AG04449 (cell line): ENCODE measurements at regions of chr22 and their contacts with region 1.

Region 1: GRCh38 chr22:46013460-46014416 is 36.8 kb upstream of the WNT7B start:
- DNase-seq: peak; percentile 76
- H3K4me3 ChIP-seq: peak overlapping the region; percentile 73
- CTCF ChIP-seq: peak; percentile 79

Region 2: DNA sequence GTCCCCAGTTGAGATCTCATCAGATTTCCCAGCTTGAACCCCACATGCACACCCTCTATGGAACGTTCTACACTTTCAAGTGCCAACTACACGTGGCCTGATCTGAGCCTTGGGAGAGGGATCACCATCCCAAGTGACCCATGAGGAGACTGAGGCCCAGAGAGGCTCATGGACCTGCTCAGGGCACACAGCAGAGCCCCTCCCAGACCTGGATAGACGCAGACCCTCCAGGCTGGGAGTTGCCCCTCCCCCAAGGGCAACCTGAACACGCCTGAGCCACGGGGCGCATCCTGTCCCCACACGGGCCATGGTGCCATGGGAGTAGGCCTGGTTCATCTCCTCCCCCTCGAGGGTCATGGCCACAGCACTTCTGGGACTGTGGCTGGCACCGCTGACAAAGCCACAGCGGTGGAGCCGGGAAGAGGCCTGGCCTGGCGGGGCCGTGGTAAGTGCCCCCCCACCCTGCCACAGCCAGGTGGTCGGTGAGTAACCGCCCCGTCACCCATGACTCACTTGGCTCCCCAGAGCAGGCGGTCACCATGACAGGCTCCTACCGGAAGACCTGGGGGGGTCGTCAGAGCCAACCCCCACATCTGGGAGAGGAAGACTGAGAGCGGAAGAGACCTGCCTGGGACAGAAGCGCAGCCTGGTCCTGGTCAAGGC is 44.9 kb before region 1 on chr22:
- CTCF ChIA-PET with region 1: no interaction called
- POLR2A ChIA-PET with region 1: no interaction called
- DNase-seq: peak; percentile 12
- H3K4me3 ChIP-seq: no peak overlapping the region
- CTCF ChIP-seq: no peak

Region 3: DNA sequence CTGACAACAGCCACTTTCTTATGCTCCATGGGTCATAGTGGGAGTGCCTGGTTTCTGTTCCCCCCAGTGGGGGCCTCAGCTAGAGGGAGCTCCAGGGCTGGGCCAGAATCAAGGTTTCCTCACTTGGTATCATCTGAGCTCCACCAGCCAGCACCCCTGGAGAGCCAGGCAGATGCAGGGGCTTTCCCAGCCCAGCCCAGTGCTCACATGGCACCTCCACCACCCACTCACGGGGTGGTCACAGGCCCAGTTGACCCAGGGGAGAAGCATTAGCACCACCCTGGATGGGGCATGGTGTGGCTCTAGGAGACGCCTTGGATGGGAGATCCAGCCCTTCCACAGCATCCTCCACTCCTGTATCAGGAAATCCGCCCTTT is 12.7 kb before region 1 on chr22:
- CTCF ChIA-PET with region 1: interaction called, 155 read pairs
- POLR2A ChIA-PET with region 1: interaction called, 3 read pairs
- DNase-seq: no peak
- H3K4me3 ChIP-seq: no peak overlapping the region
- CTCF ChIP-seq: peak; percentile 3

Region 4: DNA sequence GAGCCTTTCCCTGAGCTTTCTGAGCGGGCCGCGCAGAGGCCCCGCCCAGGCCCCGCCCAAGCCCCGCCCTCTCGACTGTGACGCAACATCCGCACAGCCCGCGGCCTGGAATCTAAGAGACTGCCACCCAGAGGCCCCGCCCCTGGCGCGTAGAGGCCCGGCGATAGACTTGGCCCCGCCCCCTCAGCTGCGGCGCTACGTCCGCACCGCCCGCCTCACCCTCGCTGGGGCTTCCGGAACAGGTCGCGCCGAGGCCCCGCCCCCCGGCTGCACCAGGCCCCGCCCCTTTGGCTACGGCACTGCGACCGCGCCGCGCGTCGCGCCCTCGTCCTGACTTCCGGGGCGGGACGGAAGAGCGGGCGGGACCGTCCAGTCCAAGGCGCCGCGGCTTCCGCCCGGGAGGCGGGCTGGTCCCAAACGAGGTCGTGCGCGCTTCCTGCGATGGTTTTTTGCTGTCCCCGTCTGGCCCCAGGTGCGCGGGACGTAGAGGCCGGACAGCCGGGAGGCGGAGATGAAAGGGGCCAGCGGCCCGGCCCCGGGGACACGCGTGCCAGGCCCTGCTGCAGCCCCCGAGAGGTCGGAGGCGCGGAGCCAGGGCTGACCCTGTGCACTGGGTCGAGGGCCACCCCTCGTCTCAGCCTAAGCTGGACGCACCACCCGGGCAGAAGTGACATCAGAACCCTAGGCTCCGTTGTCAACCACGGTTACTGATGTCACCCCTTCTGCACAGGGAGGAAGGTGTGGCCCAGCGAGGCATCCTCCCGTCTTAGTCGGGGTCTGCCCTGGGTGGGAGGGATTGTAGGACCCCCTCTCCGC is 22.2 kb after region 1 on chr22:
- CTCF ChIA-PET with region 1: interaction called, 15 read pairs
- POLR2A ChIA-PET with region 1: no interaction called
- DNase-seq: peak; percentile 83
- H3K4me3 ChIP-seq: peak overlapping the region; percentile 82
- CTCF ChIP-seq: no peak

Region 5: DNA sequence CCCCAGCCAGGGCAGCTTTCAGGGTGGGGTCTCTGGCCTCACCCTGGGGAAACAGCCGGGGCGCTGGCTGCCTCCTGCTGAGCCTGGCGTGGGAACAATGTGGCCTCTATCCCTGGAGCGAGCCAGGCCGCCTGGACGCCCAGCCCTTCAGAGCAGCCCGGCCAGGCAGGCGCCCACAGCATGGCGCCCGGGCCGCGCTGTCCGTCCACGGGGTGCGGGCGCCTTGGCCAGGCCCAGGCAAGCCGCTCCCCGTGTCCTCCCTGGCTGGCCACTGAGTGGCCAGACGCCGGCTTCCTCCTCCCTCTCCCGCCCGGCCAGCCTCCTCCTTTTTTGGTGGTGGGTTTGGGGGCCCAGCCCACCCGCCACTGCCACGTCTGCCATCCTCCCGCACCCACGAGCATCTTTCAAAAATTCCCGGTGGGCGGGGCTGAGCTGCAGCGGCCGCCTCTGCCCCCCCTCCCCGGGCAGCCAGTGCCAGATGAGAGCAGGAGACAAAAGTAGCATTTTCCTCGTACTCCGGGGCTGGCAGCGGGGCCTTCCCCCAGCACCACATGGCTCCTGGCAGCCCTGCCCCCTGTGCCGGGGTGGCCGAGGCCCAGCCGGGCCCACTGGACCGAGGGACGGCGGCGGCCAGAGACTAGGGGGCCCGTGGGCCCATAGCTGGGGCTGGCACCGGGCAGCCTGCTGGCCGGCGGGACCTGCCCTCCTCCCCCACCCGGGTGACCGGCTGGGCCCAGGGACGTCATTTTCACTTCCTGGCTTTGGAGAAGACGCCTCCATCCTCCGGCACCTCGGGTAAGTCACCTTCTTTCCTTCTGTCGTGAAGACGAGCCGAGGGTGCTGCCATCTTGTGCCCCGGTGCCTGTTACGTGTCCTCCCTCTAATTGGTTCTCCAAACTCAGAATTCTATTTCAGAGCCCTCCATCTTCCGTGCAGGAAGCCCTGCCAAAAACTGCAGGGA is 66.4 kb after region 1 on chr22:
- CTCF ChIA-PET with region 1: interaction called, 75 read pairs
- POLR2A ChIA-PET with region 1: no interaction called
- DNase-seq: no peak
- H3K4me3 ChIP-seq: peak overlapping the region; percentile 61
- CTCF ChIP-seq: no peak

Region 6: DNA sequence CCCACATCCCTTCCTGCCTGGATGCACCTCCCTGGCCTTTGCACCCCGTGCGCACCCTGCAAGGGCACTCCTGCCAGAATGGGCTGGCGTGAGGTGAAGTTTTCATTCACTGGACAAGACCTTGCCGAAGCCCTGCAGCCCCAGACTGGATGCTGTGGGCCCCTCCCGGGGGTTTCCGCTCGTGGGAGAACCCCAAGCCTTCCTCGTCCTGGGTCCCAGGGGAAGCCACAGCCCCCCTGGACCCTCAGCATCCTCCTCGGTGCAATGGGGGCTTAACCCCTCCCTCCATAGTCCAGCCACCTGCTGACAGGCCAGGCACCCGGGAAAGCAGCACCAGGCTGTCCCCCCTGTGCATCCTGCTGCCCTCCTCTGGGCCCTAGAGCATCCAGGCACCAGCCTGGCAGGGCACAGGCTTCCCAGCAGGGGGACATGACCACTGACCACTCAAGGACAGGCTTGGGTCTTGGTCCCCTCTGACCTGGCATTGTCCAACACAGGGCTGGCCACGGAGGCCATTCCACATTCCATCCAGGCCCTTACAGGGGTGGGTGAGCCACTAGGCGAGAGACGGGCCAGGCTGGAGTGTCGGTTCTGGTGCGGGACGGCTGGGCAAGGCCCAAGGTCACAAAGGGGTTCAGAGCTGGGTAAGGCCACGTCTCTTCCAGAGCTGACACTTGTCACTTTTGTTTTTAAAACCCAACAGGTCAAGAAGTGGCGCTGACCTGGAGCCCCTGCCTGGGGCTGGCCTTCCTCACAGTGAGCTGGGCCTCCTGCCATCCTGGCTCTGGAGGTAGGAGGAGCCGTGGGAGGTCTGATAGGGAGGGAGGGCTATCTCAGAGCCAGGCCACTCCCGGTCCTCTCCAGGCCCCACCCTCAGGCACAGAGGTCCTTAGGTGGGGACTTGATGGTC is 95.1 kb after region 1 on chr22:
- CTCF ChIA-PET with region 1: interaction called, 345 read pairs
- POLR2A ChIA-PET with region 1: interaction called, 3 read pairs
- DNase-seq: no peak
- H3K4me3 ChIP-seq: no peak overlapping the region
- CTCF ChIP-seq: no peak